ENCODE measurements at regions of chr1 and their contacts with region 1.

Region 1: DNA sequence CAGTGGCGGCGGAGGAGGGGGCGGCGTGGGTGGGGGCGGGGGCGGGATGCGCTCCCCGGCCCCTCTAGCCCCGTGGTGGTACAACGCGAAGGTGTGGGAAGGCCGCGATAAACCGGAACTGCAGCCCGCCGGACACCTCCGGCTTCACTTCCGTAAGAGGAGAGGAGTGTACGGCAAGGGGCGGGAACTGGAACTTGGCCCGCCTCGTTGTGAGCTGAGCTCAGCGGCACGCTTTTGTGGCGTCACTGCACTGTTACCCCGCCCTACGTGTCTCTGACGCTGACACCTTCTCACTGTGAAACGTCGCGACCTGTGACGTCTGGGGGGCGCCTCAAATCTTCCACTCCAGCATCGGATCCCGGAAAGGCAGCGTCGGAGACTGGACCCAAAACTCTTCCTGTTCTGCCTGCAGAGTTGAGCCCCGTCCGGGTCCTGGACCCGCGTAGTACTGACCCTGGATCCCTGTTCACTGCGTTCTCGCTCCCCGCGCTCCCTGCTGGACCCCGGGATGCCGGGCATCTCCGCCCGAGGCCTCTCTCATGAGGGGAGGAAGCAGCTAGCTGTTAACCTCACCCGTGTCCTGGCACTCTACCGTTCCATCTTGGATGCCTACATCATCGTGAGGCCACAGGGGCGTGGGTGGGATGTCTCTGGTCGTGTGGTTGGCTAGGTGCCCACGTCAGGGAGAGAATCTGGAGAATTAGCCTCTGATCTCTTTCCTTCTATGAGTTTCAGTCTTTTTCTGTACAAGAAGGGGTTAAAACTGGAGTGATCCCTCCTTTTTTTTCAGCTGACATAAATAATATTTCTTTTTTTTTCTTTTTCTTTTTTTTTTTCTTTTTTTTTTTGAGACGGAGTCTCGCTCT is at the start of gene ISG20L2:
- DNase-seq: peak; percentile 92 to 99 (median 96)
- H3K4me3 ChIP-seq: peak within 1 kb of the TSS; percentile 96 to 99
- H3K4me3 Mint-ChIP-seq: no peak within 1 kb of the TSS
- H3K27ac ChIP-seq: peak within 1 kb of the TSS; percentile 90
- H3K27ac Mint-ChIP-seq: peak within 1 kb of the TSS in 3 of 7 donors; percentile 94 to 99 (median 98)
- H3K4me1 ChIP-seq: peaks cover 47% of the 10 kb centered on the region
- H3K4me1 Mint-ChIP-seq: peaks cover 8 to 19% (median 10%) of the 10 kb centered on the region in 4 donors
- H3K27me3 ChIP-seq: no peaks in the 10 kb centered on the region
- H3K27me3 Mint-ChIP-seq: no peaks in the 10 kb centered on the region
- total RNA-seq, gene ISG20L2: 47.9 to 53.1 TPM

Region 2: DNA sequence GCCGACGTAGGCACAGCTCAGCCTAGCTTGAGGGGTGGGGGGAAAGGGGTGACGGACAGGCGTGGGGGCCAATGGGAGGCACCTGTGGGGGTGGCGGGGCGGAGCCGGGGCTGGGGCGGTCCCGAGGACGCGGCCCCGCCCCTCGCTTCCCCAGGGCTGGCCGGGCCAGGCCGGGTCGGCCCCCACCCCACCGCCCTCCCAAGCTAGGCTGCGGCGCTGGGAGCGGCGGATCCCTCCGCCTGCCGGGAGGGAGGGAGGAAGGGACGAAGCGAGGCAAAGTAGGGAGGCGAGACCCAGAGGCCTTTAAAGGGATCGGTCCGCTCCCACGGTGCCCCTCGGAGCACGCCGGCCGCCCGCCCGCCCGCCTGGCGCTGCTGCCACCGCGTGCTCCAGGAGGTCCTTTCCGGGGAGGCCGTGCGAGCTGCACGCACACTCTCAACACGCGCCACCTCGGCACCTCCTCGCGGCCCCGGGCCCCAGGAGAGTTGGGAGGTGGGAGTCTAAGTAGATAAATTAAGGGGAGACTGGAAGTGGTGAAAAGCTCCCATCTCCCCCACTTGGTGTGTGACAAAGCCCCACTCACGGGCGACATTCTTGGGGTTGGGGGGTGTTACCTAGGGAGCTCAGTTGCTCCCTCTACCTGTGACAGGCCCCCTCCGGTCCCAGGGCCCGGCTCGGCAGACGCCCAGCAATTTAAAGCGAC is 227.9 kb before region 1 on chr1:
- CTCF ChIA-PET with region 1: no interaction called
- POLR2A ChIA-PET with region 1: interaction called, 6 read pairs
- intact Hi-C with region 1: loop called (anchors 1 kb)
- DNase-seq: peak; percentile 91 to 96 (median 93)
- H3K4me3 ChIP-seq: peak overlapping the region; percentile 79 to 85
- H3K4me3 Mint-ChIP-seq: peak overlapping the region; percentile 90 to 98 (median 94)
- H3K27ac ChIP-seq: peak overlapping the region; percentile 94
- H3K27ac Mint-ChIP-seq: peak overlapping the region; percentile 96 to 100 (median 99)
- H3K4me1 ChIP-seq: peaks cover 78% of the 10 kb centered on the region
- H3K4me1 Mint-ChIP-seq: peaks cover 63 to 83% (median 71%) of the 10 kb centered on the region in 4 donors
- H3K27me3 ChIP-seq: no peaks in the 10 kb centered on the region
- H3K27me3 Mint-ChIP-seq: peaks cover 0 to 2% of the 10 kb centered on the region in 2 donors

Region 3: GRCh38 chr1:156689035-156689952 is 39.5 kb before region 1 on chr1:
- CTCF ChIA-PET with region 1: interaction called, 314 read pairs
- POLR2A ChIA-PET with region 1: interaction called, 60 read pairs
- intact Hi-C with region 1: loop called (anchors 1 kb)
- DNase-seq: peak; percentile 70 to 77 (median 73)
- H3K4me3 ChIP-seq: peak overlapping the region in 1 of 2 donors; percentile 2
- H3K4me3 Mint-ChIP-seq: peak overlapping the region in 5 of 8 donors; percentile 25 to 69 (median 68)
- H3K27ac ChIP-seq: no peak overlapping the region
- H3K27ac Mint-ChIP-seq: peak overlapping the region in 2 of 7 donors; percentile 33 to 89
- H3K4me1 ChIP-seq: peaks cover 25% of the 10 kb centered on the region
- H3K4me1 Mint-ChIP-seq: peaks cover 8 to 23% (median 17%) of the 10 kb centered on the region in 4 donors
- H3K27me3 ChIP-seq: peaks cover 29% of the 10 kb centered on the region
- H3K27me3 Mint-ChIP-seq: peaks cover 30 to 39% of the 10 kb centered on the region in 2 donors

Region 4: GRCh38 chr1:156740679-156741612 is 12.1 kb after region 1 on chr1 and contains the start of gene MRPL24:
- CTCF ChIA-PET with region 1: interaction called, 16 read pairs
- POLR2A ChIA-PET with region 1: interaction called, 126 read pairs
- intact Hi-C with region 1: loop called (anchors 1 kb)
- DNase-seq: peak; percentile 96 to 100 (median 99)
- H3K4me3 ChIP-seq: peak within 1 kb of the TSS; percentile 83 to 89
- H3K4me3 Mint-ChIP-seq: peak within 1 kb of the TSS; percentile 94 to 99 (median 96)
- H3K27ac ChIP-seq: peak within 1 kb of the TSS; percentile 84
- H3K27ac Mint-ChIP-seq: peak within 1 kb of the TSS; percentile 91 to 100 (median 98)
- H3K4me1 ChIP-seq: peaks cover 25% of the 10 kb centered on the region
- H3K4me1 Mint-ChIP-seq: peaks cover 18 to 45% (median 32%) of the 10 kb centered on the region in 4 donors
- H3K27me3 ChIP-seq: no peaks in the 10 kb centered on the region
- H3K27me3 Mint-ChIP-seq: no peaks in the 10 kb centered on the region
- total RNA-seq, gene MRPL24: 44.1 to 47.4 TPM

Region 5: DNA sequence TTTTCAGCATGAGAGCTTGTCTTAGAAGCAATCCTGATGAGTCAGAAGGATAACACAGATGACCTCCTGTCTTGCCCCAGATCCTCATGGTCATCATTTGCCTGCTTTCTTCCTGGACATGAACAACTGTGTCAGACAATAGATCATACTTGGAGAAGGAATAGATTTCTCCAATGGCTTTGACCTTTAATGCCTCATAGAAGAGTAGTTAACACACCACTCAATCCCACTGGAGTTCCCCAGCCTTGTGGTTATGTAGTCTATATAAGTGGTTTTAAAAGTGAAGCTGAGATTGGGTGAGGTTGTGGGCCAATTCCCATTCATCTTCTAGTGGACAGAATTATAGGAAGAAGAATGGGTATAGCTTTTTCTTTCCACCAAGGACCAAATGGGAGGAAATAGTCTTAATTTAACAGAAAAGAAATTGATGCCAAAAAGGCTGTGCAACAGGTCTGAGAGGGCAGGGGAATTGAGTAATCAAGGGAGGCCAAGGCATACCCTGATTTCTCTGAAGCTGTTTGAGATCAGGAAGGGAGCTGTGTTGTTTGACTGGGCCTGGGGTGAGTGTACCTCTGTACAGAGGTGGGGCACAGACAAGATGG is 52.9 kb after region 1 on chr1:
- CTCF ChIA-PET with region 1: interaction called, 11 read pairs
- POLR2A ChIA-PET with region 1: interaction called, 4 read pairs
- intact Hi-C with region 1: no loop called
- DNase-seq: no peak
- H3K4me3 ChIP-seq: no peak overlapping the region
- H3K4me3 Mint-ChIP-seq: no peak overlapping the region
- H3K27ac ChIP-seq: no peak overlapping the region
- H3K27ac Mint-ChIP-seq: peak overlapping the region in 4 of 7 donors; percentile 3 to 47 (median 34)
- H3K4me1 ChIP-seq: peaks cover 11% of the 10 kb centered on the region
- H3K4me1 Mint-ChIP-seq: peaks cover 17 to 35% (median 26%) of the 10 kb centered on the region in 4 donors
- H3K27me3 ChIP-seq: no peaks in the 10 kb centered on the region
- H3K27me3 Mint-ChIP-seq: no peaks in the 10 kb centered on the region

Region 6: DNA sequence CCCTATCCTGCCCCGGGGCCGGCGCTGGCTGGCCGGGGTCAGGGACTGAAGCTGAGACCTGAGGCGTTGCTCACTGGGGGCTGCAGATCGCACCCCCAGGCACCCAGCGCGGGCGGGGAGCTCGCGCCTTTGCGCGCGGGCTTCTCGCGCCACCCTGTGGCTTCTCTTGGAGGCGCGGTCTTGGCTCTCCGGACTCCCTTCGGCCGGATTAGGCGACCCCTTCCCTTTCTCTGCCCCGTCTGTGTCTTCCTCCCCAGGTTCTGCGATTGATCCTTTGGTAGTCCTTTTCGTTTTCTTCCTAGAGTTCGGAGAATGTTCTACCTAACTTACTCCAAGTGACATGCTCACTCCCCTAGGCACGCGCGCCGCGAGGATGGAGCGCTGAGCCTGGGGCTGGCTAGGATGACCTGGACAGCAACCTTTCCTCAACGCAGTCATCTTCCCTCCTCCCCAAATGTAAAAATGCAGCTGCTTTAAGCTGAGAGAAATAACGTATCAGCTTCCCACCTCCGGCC is 131.3 kb after region 1 on chr1:
- CTCF ChIA-PET with region 1: interaction called, 118 read pairs
- POLR2A ChIA-PET with region 1: interaction called, 29 read pairs
- intact Hi-C with region 1: loop called (anchors 1 kb)
- DNase-seq: peak in 4 of 5 donors; percentile 49 to 64 (median 52)
- H3K4me3 ChIP-seq: peak overlapping the region; percentile 49 to 63
- H3K4me3 Mint-ChIP-seq: peak overlapping the region; percentile 73 to 87 (median 84)
- H3K27ac ChIP-seq: no peak overlapping the region
- H3K27ac Mint-ChIP-seq: peak overlapping the region in 6 of 7 donors; percentile 20 to 86 (median 66)
- H3K4me1 ChIP-seq: peaks cover 29% of the 10 kb centered on the region
- H3K4me1 Mint-ChIP-seq: peaks cover 8 to 45% (median 26%) of the 10 kb centered on the region in 4 donors
- H3K27me3 ChIP-seq: peaks cover 16% of the 10 kb centered on the region
- H3K27me3 Mint-ChIP-seq: peaks cover 31 to 37% of the 10 kb centered on the region in 2 donors

Region 7: GRCh38 chr1:156948708-156949107 is 219.9 kb after region 1 on chr1:
- CTCF ChIA-PET with region 1: no interaction called
- POLR2A ChIA-PET with region 1: no interaction called
- intact Hi-C with region 1: no loop called
- DNase-seq: no peak
- H3K4me3 ChIP-seq: no peak overlapping the region
- H3K4me3 Mint-ChIP-seq: no peak overlapping the region
- H3K27ac ChIP-seq: no peak overlapping the region
- H3K27ac Mint-ChIP-seq: no peak overlapping the region
- H3K4me1 ChIP-seq: no peaks in the 10 kb centered on the region
- H3K4me1 Mint-ChIP-seq: no peaks in the 10 kb centered on the region
- H3K27me3 ChIP-seq: no peaks in the 10 kb centered on the region
- H3K27me3 Mint-ChIP-seq: no peaks in the 10 kb centered on the region

Measured in CD4-positive, alpha-beta memory T cell (primary cell).